Heart right ventricle (tissue), 16 donors: ENCODE measurements at regions of chr14 and their contacts with region 1.

Region 1: DNA sequence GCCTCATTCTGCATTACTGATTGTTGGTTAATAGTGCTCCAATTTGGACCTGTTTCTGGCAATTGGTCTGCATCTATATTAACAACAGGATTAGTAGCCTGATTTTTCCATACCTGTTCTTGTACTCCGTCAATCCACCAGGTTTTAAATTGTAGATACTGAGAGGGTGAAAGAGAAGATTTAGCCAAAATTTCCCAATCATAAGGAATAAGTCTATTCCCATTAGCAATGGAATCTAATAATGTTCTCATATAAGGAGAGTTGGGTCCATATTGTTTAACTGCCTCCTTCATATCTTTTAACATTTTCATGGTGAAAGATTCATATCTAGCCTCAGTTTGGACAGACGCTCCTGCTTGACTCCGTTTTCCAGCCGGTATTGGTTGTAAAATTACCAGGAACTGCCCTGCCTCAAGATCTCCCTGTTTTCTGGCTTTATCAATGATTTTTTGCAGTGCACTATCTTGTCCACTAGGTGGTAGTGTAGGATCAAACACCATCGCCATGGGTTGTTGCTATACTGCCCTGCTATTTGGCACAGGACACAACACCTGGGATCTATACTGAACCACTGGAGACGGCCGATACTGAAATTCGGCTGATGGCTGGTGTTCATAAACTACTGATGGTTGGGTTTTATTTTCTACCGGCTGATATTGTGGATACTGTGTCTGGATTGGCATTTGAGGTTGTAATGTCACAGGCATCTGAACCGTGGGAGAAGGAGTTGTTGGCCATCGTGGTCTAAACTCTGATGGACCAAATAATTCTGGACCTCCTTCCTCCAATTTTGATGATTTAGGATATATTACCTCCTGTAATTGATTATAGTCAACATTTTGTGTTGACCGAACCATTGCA is 25.2 kb downstream of the DHRS4L2 start:
- DNase-seq: peak in 1 of 2 donors; percentile 53
- ATAC-seq: peak; percentile 76 to 87 (median 84)
- H3K4me3 ChIP-seq: no peak overlapping the region
- H3K27ac ChIP-seq: no peak overlapping the region
- H3K4me1 ChIP-seq: peaks cover 0 to 16% (median 0%) of the 10 kb centered on the region in 9 donors
- H3K27me3 ChIP-seq: no peaks in the 10 kb centered on the region
- CTCF ChIP-seq: peak; percentile 80 to 97 (median 91)

Region 2: GRCh38 chr14:24088095-24088494 is 74.2 kb after region 1 on chr14:
- intact Hi-C with region 1: loop called in 5 of 10 experiments (anchors 1 to 5 kb)
- DNase-seq: no peak
- ATAC-seq: no peak
- H3K4me3 ChIP-seq: no peak overlapping the region
- H3K27ac ChIP-seq: no peak overlapping the region
- H3K4me1 ChIP-seq: peaks cover 0 to 19% (median 0%) of the 10 kb centered on the region in 9 donors
- H3K27me3 ChIP-seq: peaks cover 0 to under 1% (median 0%) of the 10 kb centered on the region in 7 donors
- CTCF ChIP-seq: no peak

Region 3: DNA sequence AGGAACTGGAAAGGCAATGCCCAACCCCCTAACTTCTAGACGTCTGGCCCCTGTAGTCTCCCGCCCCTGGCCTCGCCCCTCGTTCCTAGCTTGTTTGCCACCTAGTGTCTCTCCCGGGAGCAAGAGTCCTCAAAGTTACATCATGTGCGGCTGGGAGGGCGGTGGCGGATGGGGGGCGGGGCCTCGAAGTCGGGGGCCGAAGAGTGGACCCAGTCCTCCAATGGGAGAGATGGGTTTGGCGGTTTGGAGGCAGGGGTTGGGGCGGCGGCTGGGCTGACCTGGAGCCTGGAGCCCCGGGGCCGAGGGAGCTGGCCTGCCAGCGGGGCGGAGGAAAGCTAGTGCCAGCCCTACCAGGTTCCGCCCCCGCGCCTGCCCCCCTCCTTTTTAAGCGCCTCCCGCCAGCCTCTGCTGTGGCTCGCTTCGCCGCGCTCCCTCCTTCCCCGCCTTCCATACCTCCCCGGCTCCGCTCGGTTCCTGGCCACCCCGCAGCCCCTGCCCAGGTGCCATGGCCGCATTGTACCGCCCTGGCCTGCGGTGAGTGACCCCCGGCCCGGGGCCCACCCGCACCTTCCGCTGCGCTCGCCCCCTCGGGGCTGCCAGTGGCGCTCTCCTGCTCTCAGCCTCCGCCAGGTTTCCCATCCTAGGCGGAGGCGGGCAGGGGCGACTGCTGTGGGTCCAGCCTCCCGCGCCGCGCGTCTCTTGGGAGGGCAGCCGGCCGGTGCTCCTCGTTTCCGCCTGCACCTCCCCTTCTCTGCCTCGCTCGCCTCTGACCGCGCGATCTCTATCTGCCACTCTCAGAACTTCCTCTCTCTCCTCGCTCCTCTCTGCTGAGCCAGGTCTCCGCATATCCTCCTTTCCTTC is 80.2 kb after region 1 on chr14 and contains the start of gene PCK2:
- intact Hi-C with region 1: loop called in 5 of 10 experiments (anchors 1 to 5 kb)
- DNase-seq: peak; percentile 85 to 90
- ATAC-seq: peak; percentile 84 to 91 (median 88)
- H3K4me3 ChIP-seq: peak within 1 kb of the TSS; percentile 61 to 95 (median 87)
- H3K27ac ChIP-seq: peak within 1 kb of the TSS; percentile 74 to 95 (median 91)
- H3K4me1 ChIP-seq: peaks cover 3 to 38% (median 21%) of the 10 kb centered on the region in 9 donors
- H3K27me3 ChIP-seq: no peaks in the 10 kb centered on the region
- CTCF ChIP-seq: peak in 2 of 9 donors; percentile 15 to 23
- total RNA-seq, gene PCK2: 0.75 to 6.8 (median 2.6) TPM

Region 4: GRCh38 chr14:24108336-24108874 is 94.5 kb after region 1 on chr14:
- intact Hi-C with region 1: loop called in 2 of 10 experiments (anchors 5 kb)
- DNase-seq: no peak
- ATAC-seq: peak in 2 of 8 donors; percentile 7 to 25
- H3K4me3 ChIP-seq: no peak overlapping the region
- H3K27ac ChIP-seq: peak overlapping the region in 5 of 10 donors; percentile 6 to 77 (median 12)
- H3K4me1 ChIP-seq: peaks cover 0 to 24% (median 7%) of the 10 kb centered on the region in 9 donors
- H3K27me3 ChIP-seq: no peaks in the 10 kb centered on the region
- CTCF ChIP-seq: no peak

Region 5: GRCh38 chr14:24310646-24311604 is 297.0 kb after region 1 on chr14 and contains the start of gene LTB4R:
- intact Hi-C with region 1: loop called in 1 of 10 experiments (anchors 5 kb)
- DNase-seq: peak; percentile 63 to 83
- ATAC-seq: peak; percentile 70 to 91 (median 78)
- H3K4me3 ChIP-seq: peak within 1 kb of the TSS; percentile 45 to 71 (median 62)
- H3K27ac ChIP-seq: peak within 1 kb of the TSS; percentile 69 to 96 (median 86)
- H3K4me1 ChIP-seq: peaks cover 15 to 83% (median 66%) of the 10 kb centered on the region in 9 donors
- H3K27me3 ChIP-seq: no peaks in the 10 kb centered on the region
- CTCF ChIP-seq: peak; percentile 11 to 64 (median 40)
- total RNA-seq, gene LTB4R: 0.76 to 3.1 (median 1.8) TPM